Activated naive CD4-positive, alpha-beta T cell treated with anti-CD3 and anti-CD28 coated beads for 36 hours (primary cell): ENCODE measurements at regions of chr2 and their contacts with region 1.

Region 1: DNA sequence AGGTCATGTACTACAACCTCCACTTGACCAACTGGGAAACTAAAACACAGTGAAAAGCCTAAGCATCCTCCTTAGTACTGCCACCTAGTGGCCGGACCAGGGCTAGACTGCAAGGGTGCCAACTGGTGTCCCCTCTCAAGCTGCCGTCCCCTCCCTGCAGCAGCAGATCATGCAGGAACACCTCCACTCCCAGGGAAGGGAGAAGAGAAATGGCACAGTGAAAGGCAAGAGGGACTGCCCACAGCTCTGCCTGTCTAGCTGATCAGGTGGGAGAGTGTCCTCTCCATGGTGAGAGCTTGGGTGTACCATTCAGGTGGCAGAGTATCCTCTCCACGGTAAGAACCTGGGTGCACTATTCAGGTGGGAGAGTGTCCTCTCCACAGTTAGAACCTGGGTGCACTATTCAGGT is 78.1 kb downstream of the AAK1 start:
- DNase-seq: peak; percentile 82
- H3K4me3 Mint-ChIP-seq: no peak overlapping the region
- H3K27ac Mint-ChIP-seq: peak overlapping the region; percentile 41
- H3K4me1 Mint-ChIP-seq: peaks cover 87% of the 10 kb centered on the region
- H3K27me3 Mint-ChIP-seq: no peaks in the 10 kb centered on the region

Region 2: DNA sequence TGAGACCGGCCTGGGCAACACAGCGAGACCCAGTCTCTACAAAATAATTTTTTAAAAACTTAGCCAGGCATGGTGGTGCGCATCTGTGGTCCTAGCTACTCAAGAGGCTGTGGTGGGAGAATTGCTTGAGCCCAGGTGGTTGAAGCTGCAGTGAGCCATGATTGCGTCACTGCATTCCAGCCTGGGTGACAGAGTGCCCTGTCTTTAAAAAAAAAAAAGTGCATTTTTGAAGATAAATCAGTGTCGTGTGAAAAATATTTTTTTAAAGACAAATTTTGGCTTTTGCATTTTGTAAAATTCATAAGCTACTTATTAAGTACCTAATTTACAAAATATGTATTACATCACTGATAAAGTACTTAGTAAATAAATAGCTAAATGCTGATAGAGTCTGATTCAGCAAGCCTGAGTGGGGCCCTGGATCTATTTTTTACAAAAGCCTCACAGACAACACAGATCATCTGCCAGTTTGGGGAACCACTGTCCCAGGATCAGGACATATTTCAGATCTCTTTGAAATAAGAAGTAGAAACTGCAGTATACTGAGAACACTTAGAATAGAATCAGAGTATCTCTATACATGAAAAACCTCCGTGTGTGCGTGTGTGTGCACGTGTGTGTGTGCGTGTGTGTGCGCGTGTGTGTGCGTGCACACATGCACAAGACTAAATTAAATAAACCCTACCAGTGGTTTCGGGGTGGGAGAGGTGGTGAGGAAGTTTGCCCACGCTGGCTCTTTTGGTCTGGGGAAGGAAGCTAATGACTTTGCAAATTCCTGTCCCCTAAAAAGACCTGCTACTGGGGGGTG is 16.5 kb after region 1 on chr2:
- CTCF ChIA-PET with region 1: interaction called, 178 read pairs
- intact Hi-C with region 1: loop called (anchors 2 kb)
- DNase-seq: peak; percentile 25
- H3K4me3 Mint-ChIP-seq: peak overlapping the region; percentile 48
- H3K27ac Mint-ChIP-seq: peak overlapping the region; percentile 69
- H3K4me1 Mint-ChIP-seq: peaks cover 91% of the 10 kb centered on the region
- H3K27me3 Mint-ChIP-seq: no peaks in the 10 kb centered on the region

Region 3: GRCh38 chr2:69616756-69617155 is 51.3 kb after region 1 on chr2:
- CTCF ChIA-PET with region 1: interaction called, 13 read pairs
- intact Hi-C with region 1: no loop called
- DNase-seq: peak; percentile 73
- H3K4me3 Mint-ChIP-seq: peak overlapping the region; percentile 11
- H3K27ac Mint-ChIP-seq: peak overlapping the region; percentile 57
- H3K4me1 Mint-ChIP-seq: peaks cover 37% of the 10 kb centered on the region
- H3K27me3 Mint-ChIP-seq: no peaks in the 10 kb centered on the region

Region 4: GRCh38 chr2:69652221-69652651 is 86.8 kb after region 1 on chr2:
- CTCF ChIA-PET with region 1: interaction called, 27 read pairs
- intact Hi-C with region 1: no loop called
- DNase-seq: peak; percentile 55
- H3K4me3 Mint-ChIP-seq: no peak overlapping the region
- H3K27ac Mint-ChIP-seq: peak overlapping the region; percentile 66
- H3K4me1 Mint-ChIP-seq: peaks cover 44% of the 10 kb centered on the region
- H3K27me3 Mint-ChIP-seq: no peaks in the 10 kb centered on the region

Region 5: DNA sequence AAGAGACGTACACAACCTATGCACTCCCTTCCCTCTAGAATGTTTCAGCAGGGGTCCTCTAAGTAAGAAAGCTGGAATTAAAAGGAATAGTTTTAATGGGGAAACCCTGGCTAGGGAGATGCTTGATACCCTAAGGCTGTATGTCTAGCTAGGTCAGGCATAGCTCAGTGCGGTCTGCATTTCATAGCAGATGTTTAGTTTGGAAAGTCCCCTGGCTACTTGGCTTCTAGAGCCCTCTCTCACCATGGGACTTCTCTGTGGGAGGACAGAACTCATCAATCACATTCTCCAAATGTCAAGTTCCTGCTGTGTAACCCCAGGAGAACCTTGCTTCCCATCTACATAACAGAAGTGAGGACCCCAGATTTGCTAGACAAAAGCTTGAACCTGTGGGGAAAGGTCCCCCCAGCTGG is 152.4 kb after region 1 on chr2:
- CTCF ChIA-PET with region 1: interaction called, 47 read pairs
- intact Hi-C with region 1: no loop called
- DNase-seq: no peak
- H3K4me3 Mint-ChIP-seq: no peak overlapping the region
- H3K27ac Mint-ChIP-seq: no peak overlapping the region
- H3K4me1 Mint-ChIP-seq: peaks cover 6% of the 10 kb centered on the region
- H3K27me3 Mint-ChIP-seq: no peaks in the 10 kb centered on the region